Activated CD4-positive, alpha-beta T cell treated with anti-CD3 and anti-CD28 coated beads for 36 hours (primary cell): ENCODE measurements at regions of chr17 and their contacts with region 1.

Region 1: DNA sequence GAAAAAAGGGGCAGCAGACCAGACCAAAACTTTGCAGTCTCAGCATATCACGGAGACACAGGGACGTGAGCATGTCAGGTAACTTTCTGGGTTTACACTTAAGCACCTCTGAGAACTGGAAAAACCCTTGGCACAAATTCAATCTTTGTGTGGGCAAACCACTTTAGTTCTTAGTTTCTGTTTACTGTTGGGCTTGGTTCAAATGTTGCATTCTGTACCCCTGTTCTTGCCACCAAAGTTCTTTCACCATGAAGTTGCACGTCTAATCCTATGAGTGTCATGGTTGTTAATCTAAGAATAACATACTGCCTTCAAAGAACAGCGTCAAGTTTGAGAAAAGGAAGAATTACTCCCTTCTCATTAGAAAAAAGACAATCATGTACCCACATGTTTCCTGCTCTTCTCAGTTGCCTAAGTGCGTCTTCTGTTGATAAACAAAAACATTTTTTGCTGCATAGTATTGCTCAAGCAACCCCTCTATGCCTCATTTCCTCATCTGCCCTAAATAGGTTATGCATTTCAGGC is 11.6 kb downstream of the KRT33A start:
- DNase-seq: peak; percentile 41
- ATAC-seq: peak; percentile 66
- H3K4me3 Mint-ChIP-seq: no peak overlapping the region
- H3K27ac Mint-ChIP-seq: peak overlapping the region; percentile 55
- H3K4me1 Mint-ChIP-seq: peaks cover 76% of the 10 kb centered on the region
- H3K27me3 Mint-ChIP-seq: peaks cover 4% of the 10 kb centered on the region

Region 2: GRCh38 chr17:41127371-41127770 is 211.7 kb before region 1 on chr17:
- CTCF ChIA-PET with region 1: no interaction called
- POLR2A ChIA-PET with region 1: no interaction called
- intact Hi-C with region 1: loop called in 1 of 2 experiments (anchors 5 kb)
- DNase-seq: no peak
- ATAC-seq: no peak
- H3K4me3 Mint-ChIP-seq: no peak overlapping the region
- H3K27ac Mint-ChIP-seq: no peak overlapping the region
- H3K4me1 Mint-ChIP-seq: peaks cover 50% of the 10 kb centered on the region
- H3K27me3 Mint-ChIP-seq: no peaks in the 10 kb centered on the region

Region 3: DNA sequence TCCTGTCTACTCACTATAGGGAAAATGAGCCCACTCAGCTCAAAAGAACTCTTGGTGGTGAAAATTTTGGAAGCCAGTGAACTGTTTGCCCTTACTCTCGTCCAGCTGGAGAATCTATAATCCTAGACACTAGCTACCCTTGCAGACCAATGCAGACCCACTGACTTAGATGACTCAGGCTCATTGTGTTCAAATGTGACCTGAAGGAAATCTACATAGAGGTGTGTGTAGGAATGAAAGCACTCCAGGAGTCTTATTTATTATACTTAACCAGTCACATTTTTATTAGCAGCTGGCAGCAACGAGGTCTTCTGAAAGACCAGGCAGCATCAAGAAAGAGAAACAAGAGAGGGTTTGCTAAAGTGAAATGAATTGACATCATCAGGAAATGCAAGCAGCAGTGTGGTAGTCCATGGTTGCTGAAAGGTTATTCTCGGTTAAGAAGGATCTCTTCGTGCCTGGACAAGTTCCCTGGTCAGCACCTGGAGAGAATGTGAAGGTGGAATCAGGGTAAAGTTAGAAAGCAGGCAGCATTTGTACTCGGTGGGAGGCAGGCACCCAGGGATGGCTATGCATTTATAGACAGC is 37.7 kb before region 1 on chr17:
- CTCF ChIA-PET with region 1: no interaction called
- POLR2A ChIA-PET with region 1: no interaction called
- intact Hi-C with region 1: no loop called
- DNase-seq: no peak
- ATAC-seq: no peak
- H3K4me3 Mint-ChIP-seq: no peak overlapping the region
- H3K27ac Mint-ChIP-seq: no peak overlapping the region
- H3K4me1 Mint-ChIP-seq: peaks cover 5% of the 10 kb centered on the region
- H3K27me3 Mint-ChIP-seq: no peaks in the 10 kb centered on the region

Region 4: GRCh38 chr17:41403798-41404671 is 65.0 kb after region 1 on chr17:
- CTCF ChIA-PET with region 1: interaction called, 8 read pairs
- POLR2A ChIA-PET with region 1: no interaction called
- intact Hi-C with region 1: loop called (anchors 1 kb)
- DNase-seq: peak; percentile 80
- ATAC-seq: peak; percentile 91
- H3K4me3 Mint-ChIP-seq: peak overlapping the region; percentile 10
- H3K27ac Mint-ChIP-seq: peak overlapping the region; percentile 87
- H3K4me1 Mint-ChIP-seq: peaks cover 37% of the 10 kb centered on the region
- H3K27me3 Mint-ChIP-seq: peaks cover 2% of the 10 kb centered on the region

Region 5: DNA sequence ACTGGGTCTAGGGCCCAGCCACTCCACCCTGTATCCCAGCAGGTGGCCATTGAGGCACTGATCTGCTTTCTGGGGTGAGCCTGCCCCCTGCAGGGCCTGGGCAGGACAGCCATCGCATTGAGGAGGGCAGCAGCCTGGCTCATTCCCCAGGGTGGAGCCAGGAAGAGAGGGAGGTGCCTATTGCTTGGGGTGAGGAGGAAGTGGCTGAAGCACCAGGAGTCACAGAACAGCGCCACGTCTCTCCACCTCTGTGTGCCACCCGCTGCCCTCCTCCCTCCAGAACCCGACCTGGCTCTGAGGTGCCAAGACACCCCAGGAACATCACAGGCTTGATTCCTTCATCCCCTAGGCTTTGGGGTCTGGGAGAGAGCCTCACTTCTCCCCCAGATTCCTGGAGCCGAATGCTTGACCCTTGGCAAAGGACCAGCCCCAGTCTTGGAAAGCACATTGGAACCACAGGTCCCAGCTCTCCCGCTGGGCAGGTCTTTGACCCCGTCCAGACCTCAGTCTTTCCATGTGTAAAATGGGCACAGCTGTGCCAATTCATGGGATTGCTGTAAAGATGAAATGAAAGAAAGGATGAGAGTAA is 157.9 kb after region 1 on chr17:
- CTCF ChIA-PET with region 1: interaction called, 3 read pairs
- POLR2A ChIA-PET with region 1: no interaction called
- intact Hi-C with region 1: loop called in 1 of 2 experiments (anchors 5 kb)
- DNase-seq: peak; percentile 87
- ATAC-seq: peak; percentile 100
- H3K4me3 Mint-ChIP-seq: no peak overlapping the region
- H3K27ac Mint-ChIP-seq: peak overlapping the region; percentile 10
- H3K4me1 Mint-ChIP-seq: peaks cover 10% of the 10 kb centered on the region
- H3K27me3 Mint-ChIP-seq: no peaks in the 10 kb centered on the region